Activated CD4-positive, alpha-beta memory T cell treated with anti-CD3 and anti-CD28 coated beads for 36 hours (primary cell): ENCODE measurements at regions of chr6 and their contacts with region 1.

Region 1: DNA sequence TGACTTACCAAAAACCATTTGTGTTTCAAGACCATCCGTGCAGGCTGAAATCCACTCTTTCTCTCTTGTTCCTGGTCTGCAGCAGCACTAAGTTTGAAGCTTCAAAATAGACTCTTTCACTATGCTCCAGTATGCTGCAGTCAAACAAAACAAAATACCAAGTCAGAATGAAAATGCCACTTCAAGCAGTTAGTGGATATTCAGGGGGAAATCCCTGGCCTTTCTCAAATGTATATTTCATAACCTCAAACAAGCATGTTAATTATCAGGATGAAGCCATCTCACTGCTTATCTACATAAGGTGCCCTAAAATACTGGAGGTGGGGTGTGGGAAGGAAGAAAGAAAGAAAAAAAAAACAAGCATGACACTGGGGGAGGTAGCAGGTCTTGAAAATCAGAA is 103.5 kb downstream of the ATXN1 start:
- DNase-seq: no peak
- H3K4me3 Mint-ChIP-seq: peak overlapping the region; percentile 60
- H3K27ac Mint-ChIP-seq: peak overlapping the region; percentile 87
- H3K4me1 Mint-ChIP-seq: peaks cover 80% of the 10 kb centered on the region
- H3K27me3 Mint-ChIP-seq: no peaks in the 10 kb centered on the region

Region 2: GRCh38 chr6:16438718-16439591 is 218.8 kb before region 1 on chr6:
- CTCF ChIA-PET with region 1: no interaction called
- POLR2A ChIA-PET with region 1: interaction called, 3 read pairs
- intact Hi-C with region 1: loop called (anchors 2 kb)
- DNase-seq: peak; percentile 62
- H3K4me3 Mint-ChIP-seq: peak overlapping the region; percentile 98
- H3K27ac Mint-ChIP-seq: peak overlapping the region; percentile 100
- H3K4me1 Mint-ChIP-seq: peaks cover 69% of the 10 kb centered on the region
- H3K27me3 Mint-ChIP-seq: no peaks in the 10 kb centered on the region

Region 3: GRCh38 chr6:16591396-16592222 is 66.2 kb before region 1 on chr6:
- CTCF ChIA-PET with region 1: no interaction called
- POLR2A ChIA-PET with region 1: interaction called, 9 read pairs
- intact Hi-C with region 1: loop called (anchors 1 kb)
- DNase-seq: peak; percentile 72
- H3K4me3 Mint-ChIP-seq: peak overlapping the region; percentile 39
- H3K27ac Mint-ChIP-seq: peak overlapping the region; percentile 78
- H3K4me1 Mint-ChIP-seq: peaks cover 43% of the 10 kb centered on the region
- H3K27me3 Mint-ChIP-seq: no peaks in the 10 kb centered on the region

Region 4: GRCh38 chr6:16608444-16608843 is 49.3 kb before region 1 on chr6:
- CTCF ChIA-PET with region 1: no interaction called
- POLR2A ChIA-PET with region 1: no interaction called
- intact Hi-C with region 1: no loop called
- DNase-seq: no peak
- H3K4me3 Mint-ChIP-seq: no peak overlapping the region
- H3K27ac Mint-ChIP-seq: no peak overlapping the region
- H3K4me1 Mint-ChIP-seq: peaks cover 9% of the 10 kb centered on the region
- H3K27me3 Mint-ChIP-seq: no peaks in the 10 kb centered on the region

Region 5: DNA sequence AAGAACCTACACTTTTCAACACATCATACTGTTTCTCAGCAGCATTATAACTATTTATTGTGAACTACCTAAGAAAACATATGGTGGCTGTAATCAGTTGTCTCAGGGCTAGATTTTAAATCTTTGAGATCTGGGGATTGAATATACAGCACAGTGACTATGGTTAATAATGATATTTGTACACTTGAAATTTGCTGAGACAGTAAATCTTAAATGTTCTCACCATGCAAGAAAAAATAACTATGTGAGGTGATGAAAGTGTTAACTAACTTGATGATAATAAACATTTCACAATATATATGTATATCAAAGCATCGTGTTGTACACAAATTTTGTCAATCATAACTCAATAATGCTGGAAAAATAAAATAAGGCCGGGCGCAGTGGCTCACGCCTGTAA is 10.3 kb before region 1 on chr6:
- CTCF ChIA-PET with region 1: no interaction called
- POLR2A ChIA-PET with region 1: no interaction called
- intact Hi-C with region 1: no loop called
- DNase-seq: no peak
- H3K4me3 Mint-ChIP-seq: no peak overlapping the region
- H3K27ac Mint-ChIP-seq: no peak overlapping the region
- H3K4me1 Mint-ChIP-seq: peaks cover 26% of the 10 kb centered on the region
- H3K27me3 Mint-ChIP-seq: no peaks in the 10 kb centered on the region

Region 6: DNA sequence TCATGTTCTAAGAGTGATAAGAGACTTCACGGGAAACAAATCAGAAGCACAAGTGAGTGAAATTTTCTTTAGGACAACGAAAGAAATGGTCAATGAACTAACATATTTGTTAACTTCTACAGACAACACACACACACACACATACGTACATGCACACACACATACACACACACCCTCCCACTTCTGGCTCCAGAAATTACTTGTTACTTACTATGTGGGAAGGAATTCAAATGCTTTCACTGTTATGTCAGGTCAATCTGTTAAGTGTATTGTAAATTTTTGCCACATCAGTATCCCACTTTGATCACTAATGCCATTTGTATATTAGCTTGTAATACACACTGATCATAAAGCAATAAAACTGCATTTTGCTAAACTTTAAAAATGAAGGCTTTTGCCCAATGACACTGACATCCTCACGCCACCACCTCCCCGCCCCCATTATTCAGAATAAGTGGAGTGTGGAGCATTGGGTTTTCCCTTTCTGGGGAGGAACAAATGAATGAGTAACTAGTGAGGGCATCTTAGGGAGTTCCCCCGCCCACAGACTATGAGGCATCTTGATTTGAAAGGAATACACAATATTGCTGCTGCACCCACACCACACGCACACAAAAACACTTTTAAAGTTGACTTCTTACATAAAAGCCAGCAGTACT is 27.3 kb after region 1 on chr6:
- CTCF ChIA-PET with region 1: interaction called, 4 read pairs
- POLR2A ChIA-PET with region 1: interaction called, 3 read pairs
- intact Hi-C with region 1: loop called (anchors 1 kb)
- DNase-seq: peak; percentile 94
- H3K4me3 Mint-ChIP-seq: peak overlapping the region; percentile 52
- H3K27ac Mint-ChIP-seq: peak overlapping the region; percentile 79
- H3K4me1 Mint-ChIP-seq: peaks cover 91% of the 10 kb centered on the region
- H3K27me3 Mint-ChIP-seq: no peaks in the 10 kb centered on the region

Region 7: DNA sequence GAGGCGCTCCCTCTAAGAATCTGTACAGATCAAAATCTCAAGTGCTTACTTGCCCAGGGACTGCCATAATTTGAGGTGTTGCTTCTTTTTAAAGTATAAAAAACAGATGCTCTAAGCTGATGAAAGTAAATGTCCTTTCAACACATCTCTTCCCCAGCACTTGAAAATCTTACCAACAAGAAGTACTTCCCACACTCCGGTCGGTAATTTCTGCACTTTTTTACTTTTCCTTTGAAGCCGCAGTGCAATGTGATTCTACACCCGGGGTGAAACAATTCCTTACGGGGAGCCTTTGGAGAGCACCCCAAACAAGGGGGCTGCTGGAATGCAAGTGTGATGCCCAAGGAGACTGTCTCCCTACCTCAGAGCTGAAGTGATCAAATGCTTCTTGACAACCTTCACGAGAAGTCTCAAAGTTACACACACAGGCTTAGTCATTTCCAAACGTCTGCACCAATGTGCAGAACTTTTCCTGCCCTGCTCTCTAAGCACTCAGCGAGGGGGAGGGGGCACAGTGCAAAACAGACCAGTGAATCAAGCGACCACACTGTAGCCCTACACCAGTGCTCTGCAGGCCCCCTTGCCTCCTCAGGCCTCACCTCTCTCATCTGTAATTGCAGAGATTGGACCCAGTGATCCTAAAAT is 46.8 kb after region 1 on chr6:
- CTCF ChIA-PET with region 1: interaction called, 11 read pairs
- POLR2A ChIA-PET with region 1: interaction called, 37 read pairs
- intact Hi-C with region 1: loop called (anchors 1 kb)
- DNase-seq: peak; percentile 86
- H3K4me3 Mint-ChIP-seq: peak overlapping the region; percentile 87
- H3K27ac Mint-ChIP-seq: peak overlapping the region; percentile 87
- H3K4me1 Mint-ChIP-seq: peaks cover 69% of the 10 kb centered on the region
- H3K27me3 Mint-ChIP-seq: no peaks in the 10 kb centered on the region

Region 8: GRCh38 chr6:16836144-16836981 is 178.6 kb after region 1 on chr6:
- CTCF ChIA-PET with region 1: no interaction called
- POLR2A ChIA-PET with region 1: no interaction called
- intact Hi-C with region 1: no loop called
- DNase-seq: peak; percentile 25
- H3K4me3 Mint-ChIP-seq: peak overlapping the region; percentile 66
- H3K27ac Mint-ChIP-seq: peak overlapping the region; percentile 83
- H3K4me1 Mint-ChIP-seq: peaks cover 38% of the 10 kb centered on the region
- H3K27me3 Mint-ChIP-seq: peaks cover 4% of the 10 kb centered on the region